AG04449 (cell line): ENCODE measurements at regions of chr17 and their contacts with region 1.

Region 1: GRCh38 chr17:64025732-64026294 is 5.4 kb upstream of the ICAM2 start:
- DNase-seq: no peak
- H3K4me3 ChIP-seq: peak overlapping the region; percentile 20
- CTCF ChIP-seq: peak; percentile 90

Region 2: GRCh38 chr17:63904316-63904715 is 121.5 kb before region 1 on chr17:
- CTCF ChIA-PET with region 1: interaction called, 79 read pairs
- POLR2A ChIA-PET with region 1: no interaction called
- DNase-seq: no peak
- H3K4me3 ChIP-seq: no peak overlapping the region
- CTCF ChIP-seq: no peak

Region 3: DNA sequence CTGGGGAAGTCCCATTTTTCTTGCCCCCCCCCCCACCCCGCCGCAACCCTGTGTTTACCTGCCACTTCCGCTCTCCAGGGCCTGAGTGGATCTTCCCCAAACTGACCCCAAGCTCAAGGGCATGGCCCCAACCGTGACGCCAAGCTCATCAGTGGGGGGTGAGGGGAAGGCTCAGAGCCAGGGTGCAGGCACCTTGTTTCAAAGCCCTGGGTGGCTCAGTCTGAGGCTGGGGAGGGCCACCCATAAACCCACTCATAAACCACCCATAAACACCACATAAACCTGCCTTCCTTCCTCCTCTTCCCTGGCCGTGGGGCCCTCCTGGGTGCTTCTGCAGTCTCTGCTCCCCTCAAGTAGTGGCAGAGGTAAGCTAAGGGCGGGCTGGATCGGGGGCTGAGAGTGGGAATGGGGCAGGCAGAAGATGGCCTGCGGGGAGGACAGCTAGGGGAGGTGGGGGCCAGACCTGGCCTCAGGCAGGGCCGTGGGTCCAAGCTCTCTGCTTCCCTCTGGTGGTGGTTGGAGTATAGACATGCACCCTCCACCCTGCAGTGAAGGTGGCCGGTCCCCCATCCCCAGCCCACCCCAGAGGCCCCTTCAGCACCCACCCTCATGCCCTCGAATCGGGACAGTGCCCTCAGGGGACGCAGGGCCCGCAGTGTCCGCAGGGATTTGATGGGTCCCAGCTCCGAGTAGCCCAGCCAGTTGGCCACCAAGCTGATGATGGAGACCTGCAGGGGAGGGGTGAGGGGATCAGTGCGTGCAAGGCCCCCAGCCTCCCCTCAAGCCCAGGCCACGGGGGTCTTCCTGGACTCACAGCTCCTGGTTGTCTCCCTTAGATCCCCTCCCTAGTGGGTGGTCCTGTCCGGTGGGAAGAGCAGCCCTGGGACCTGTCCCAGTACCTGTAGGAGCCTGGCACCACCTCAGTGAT is 79.1 kb before region 1 on chr17:
- CTCF ChIA-PET with region 1: interaction called, 36 read pairs
- POLR2A ChIA-PET with region 1: no interaction called
- DNase-seq: no peak
- H3K4me3 ChIP-seq: no peak overlapping the region
- CTCF ChIP-seq: peak; percentile 77

Region 4: DNA sequence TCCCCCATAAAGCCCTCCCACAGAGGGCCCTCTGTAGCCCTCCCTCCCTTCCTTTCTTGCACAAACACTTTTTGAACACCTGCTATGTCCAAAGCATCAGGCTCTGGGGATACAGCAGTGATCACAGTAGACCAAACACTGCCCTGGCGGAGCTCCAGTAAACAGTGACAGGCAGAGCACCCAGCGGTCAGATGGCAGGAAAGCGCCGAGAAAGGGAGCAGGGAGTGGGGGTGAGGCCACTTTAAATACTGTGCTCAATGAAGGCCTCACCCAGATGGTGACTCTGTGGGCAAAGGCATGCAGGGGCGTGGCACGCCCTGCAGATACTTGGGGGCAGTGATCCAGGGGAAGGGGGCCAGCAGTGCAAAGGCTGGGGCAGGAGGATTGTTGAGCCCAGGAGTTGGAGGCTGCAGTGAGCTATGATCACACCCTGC is 20.1 kb before region 1 on chr17:
- CTCF ChIA-PET with region 1: interaction called, 39 read pairs
- POLR2A ChIA-PET with region 1: interaction called, 3 read pairs
- DNase-seq: no peak
- H3K4me3 ChIP-seq: no peak overlapping the region
- CTCF ChIP-seq: no peak

Region 5: DNA sequence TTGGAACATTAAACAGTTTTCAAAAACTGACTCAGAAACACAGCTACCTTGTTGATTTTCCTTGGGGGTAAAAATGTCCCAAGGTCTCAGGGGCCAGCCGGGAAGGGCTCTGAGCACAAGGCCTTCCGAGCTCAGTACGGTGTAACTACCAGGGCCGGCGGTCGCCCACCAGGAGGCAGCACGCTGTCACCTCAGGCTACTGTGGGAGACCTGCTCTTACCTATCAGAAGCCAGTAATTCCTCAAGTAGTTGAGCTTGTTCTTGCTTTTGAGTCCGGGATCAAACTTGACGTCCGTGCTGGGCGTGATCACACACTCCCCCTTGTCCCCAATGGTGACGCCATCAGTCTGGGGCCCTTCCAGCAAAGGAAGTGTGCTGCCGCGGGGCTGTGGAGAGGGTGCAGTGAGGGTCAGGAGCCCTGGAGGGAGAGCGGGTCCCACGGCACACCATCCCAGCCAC is 38.0 kb after region 1 on chr17:
- CTCF ChIA-PET with region 1: interaction called, 224 read pairs
- POLR2A ChIA-PET with region 1: no interaction called
- DNase-seq: no peak
- H3K4me3 ChIP-seq: no peak overlapping the region
- CTCF ChIP-seq: peak; percentile 47

Region 6: DNA sequence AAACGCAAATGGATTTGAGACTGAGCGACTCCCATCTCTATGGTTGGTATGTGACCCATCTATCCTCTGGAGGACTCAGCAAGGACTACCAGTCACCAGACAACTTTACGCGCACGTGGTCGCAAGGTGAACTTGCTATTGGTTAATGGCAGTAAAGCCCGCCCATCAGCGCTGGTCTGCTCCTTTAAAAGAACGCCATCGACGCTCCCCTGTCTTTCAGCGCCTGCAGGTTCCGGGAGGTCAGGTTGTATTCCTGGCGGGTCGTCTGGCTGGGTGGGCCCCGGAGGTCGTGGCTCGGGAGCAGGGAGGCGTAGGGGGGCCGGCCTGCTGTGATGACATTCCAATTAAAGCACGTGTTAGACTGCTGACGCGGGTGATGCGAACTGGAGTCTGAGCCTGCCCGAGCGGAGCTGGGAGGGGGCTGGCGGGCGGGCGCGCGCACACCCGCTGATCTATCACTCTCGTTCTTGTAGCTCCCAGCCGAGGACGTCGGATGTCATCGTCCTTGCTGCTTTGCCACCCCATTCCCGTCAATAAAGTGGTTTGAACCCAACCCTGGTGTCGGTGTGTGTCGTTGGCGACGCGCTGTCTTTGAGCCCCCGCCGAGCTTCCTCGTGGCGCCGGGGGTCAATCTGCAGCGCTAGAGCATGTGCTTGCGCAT is 120.1 kb after region 1 on chr17:
- CTCF ChIA-PET with region 1: interaction called, 1,118 read pairs
- POLR2A ChIA-PET with region 1: interaction called, 4 read pairs
- DNase-seq: peak; percentile 100
- H3K4me3 ChIP-seq: peak overlapping the region; percentile 86
- CTCF ChIP-seq: no peak

Region 7: DNA sequence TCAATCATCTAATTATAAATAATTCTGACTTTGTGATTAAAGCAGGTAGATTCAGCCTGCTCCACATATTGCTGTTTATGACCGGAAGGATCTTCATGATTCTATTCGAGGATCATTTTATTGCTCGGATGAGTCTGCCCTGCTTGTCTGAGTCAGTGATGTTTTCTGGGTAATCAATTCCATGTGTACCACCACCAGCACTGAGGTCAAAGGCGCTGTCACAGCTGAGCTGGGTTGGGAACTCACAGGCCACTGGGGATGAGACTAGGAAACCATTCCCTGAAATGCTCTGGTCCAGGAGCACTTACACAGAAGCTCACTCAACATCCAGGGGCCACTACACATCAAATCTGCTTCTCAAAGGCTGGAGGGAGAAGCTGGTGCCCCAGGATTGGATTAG is 134.6 kb after region 1 on chr17:
- CTCF ChIA-PET with region 1: no interaction called
- POLR2A ChIA-PET with region 1: no interaction called
- DNase-seq: no peak
- H3K4me3 ChIP-seq: no peak overlapping the region
- CTCF ChIP-seq: no peak